Endothelial cell of umbilical vein (primary cell): ENCODE measurements at regions of chr4 and their contacts with region 1.

Region 1: DNA sequence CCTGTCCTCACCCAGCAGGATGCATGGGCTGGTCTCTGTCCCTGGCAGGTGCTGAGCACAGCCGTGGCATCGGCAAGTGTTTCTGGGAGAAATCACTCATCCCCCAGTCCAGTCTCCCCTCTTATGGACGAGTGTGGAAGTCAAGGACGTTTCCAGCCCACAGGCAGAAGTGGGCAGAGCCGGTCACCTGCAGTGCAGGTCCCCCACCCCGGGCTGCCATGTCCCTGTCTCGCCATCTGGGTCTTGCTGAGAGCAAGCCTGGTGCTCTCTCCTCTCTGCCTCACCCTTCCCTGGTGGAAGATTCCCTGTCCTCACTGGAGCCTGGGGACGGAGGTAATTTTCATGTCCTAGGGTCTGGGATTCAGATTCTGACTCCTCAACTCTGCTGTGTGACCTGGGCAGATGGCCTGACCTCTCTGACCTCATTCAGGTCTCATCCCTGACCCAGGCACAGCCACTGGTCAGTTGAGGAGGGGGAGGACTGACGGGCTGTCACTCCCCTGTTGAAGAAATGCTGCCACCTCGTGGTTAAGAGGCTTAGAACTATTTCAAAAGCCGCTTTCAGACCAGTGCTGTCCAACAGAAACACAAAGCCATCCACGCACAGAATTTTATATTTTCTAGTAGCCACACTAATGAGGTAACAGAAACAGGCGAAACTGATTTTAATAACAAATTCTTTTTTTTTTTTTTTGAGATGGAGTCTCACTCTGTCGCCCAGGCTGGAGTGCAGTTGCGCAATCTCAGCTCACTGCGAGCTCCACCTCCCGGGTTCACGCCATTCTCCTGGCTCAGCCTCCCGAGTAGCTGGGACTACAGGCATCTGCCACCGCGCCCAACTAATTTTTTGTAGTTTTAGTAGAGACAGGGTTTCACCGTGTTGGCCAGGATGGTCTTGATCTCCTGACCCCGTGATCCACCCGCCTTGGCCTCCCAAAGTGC is 1.8 kb downstream of the CPZ start:
- DNase-seq: peak; percentile 53
- H3K4me3 ChIP-seq: no peak overlapping the region
- H3K27ac ChIP-seq: no peak overlapping the region
- H3K4me1 ChIP-seq: no peaks in the 10 kb centered on the region
- H3K27me3 ChIP-seq: peaks cover 22 to 26% of the 10 kb centered on the region in 2 experiments
- CTCF ChIP-seq: peak; percentile 49 to 63
- POLR2A ChIP-seq: no peak

Region 2: DNA sequence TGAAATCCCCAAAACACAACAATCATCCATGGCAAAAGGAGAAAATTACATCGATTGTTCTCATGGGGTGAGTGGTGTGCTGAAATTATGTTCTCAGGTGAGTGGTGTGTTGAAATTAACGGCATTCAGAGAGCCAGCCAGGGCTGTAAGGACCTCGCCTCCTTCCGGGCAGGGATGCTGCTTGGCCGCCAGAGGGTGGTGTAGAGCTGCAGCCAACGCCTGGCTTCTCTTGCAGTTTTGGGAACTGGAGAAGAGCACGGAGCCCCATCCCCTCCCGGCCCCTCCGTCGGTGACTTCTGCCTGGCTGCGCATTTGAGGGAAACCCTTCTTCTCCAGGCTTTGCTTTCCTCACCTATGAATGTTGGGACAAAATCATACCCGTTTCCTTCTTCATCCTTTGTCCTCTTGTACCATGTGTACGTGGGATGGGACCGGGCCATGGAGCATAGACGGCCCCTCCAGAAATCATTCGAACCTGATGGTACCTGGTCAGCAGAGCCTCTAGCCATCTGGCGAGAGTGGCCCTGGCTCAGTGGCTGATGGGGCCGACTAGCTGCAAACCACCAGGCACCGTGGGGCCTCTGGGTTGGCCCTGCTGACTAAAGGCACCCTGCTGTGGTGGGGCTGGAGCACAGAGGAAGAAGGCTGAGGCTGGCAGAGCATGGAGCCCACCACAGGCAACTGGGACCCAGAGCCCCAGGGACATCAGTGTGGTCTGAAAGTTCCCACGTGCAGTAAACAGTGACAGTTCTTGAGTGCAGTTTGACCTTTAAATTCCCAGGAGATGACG is 125.4 kb before region 1 on chr4:
- CTCF ChIA-PET with region 1: interaction called, 26 read pairs
- POLR2A ChIA-PET with region 1: no interaction called
- dilution Hi-C with region 1: no loop called
- intact Hi-C with region 1: no loop called
- DNase-seq: peak; percentile 45
- H3K4me3 ChIP-seq: no peak overlapping the region
- H3K27ac ChIP-seq: no peak overlapping the region
- H3K4me1 ChIP-seq: no peaks in the 10 kb centered on the region
- H3K27me3 ChIP-seq: no peaks in the 10 kb centered on the region
- CTCF ChIP-seq: peak; percentile 88 to 97
- POLR2A ChIP-seq: no peak

Region 3: DNA sequence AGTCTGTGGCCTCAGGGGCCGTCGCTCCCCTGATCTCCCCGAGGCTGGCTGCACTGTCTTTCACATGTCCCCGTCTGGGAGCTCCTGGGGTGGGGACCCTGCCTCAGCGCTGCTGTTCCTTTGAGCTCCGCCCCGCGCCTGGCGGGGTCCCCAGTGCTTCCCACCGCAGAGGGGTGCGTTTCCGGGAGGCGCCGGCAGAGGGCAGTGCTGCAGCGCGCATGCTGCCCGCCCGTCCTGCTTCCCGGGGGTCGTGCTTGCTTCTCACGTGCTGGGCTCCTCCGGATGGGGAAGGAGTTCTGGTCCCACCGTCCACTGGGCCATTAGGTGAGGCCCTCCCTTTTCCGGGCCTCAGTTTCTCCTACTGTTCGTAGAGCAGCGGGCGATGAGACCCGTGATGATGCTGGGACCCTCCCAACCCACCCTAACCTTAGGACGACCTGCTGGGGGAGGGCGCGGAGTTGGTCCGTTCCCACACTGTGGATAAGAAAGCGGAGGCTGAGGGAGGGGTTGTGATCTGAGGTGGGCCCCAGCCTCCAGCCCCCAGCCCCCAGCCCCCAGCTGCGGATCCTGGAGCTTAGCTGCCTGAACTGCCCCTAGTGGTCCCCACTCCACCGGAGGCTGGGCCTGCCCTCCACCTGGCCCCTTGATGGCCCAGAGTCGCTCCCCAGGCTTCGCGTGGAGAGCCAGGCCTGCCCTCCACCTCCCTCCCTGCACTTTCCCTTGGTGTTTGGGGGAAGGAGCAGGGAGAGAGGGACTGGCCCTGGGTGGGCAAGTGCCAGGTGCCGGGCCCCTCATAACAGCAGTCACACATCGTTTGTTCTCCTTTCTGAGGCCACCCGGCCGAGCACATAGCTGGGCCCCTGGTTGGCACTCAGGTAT is 13.5 kb after region 1 on chr4:
- CTCF ChIA-PET with region 1: interaction called, 16 read pairs
- POLR2A ChIA-PET with region 1: no interaction called
- dilution Hi-C with region 1: no loop called
- intact Hi-C with region 1: no loop called
- DNase-seq: peak; percentile 11
- H3K4me3 ChIP-seq: no peak overlapping the region
- H3K27ac ChIP-seq: no peak overlapping the region
- H3K4me1 ChIP-seq: no peaks in the 10 kb centered on the region
- H3K27me3 ChIP-seq: no peaks in the 10 kb centered on the region
- CTCF ChIP-seq: peak; percentile 89 to 97
- POLR2A ChIP-seq: no peak